ENCODE measurements at regions of chr5 and their contacts with region 1.

Region 1: GRCh38 chr5:81105261-81105877 is 127.8 kb upstream of the CKMT2 start:
- DNase-seq: no peak
- H3K4me3 Mint-ChIP-seq: no peak overlapping the region
- H3K27ac Mint-ChIP-seq: no peak overlapping the region
- H3K4me1 Mint-ChIP-seq: peaks cover 24% of the 10 kb centered on the region
- H3K27me3 Mint-ChIP-seq: no peaks in the 10 kb centered on the region

Region 2: GRCh38 chr5:80686757-80687156 is 418.6 kb before region 1 on chr5:
- intact Hi-C with region 1: loop called (anchors 2 kb)
- DNase-seq: no peak
- H3K4me3 Mint-ChIP-seq: no peak overlapping the region
- H3K27ac Mint-ChIP-seq: no peak overlapping the region
- H3K4me1 Mint-ChIP-seq: peaks cover 27% of the 10 kb centered on the region
- H3K27me3 Mint-ChIP-seq: no peaks in the 10 kb centered on the region

Region 3: GRCh38 chr5:80711938-80712337 is 393.4 kb before region 1 on chr5:
- intact Hi-C with region 1: loop called (anchors 10 kb)
- DNase-seq: no peak
- H3K4me3 Mint-ChIP-seq: no peak overlapping the region
- H3K27ac Mint-ChIP-seq: no peak overlapping the region
- H3K4me1 Mint-ChIP-seq: peaks cover 18% of the 10 kb centered on the region
- H3K27me3 Mint-ChIP-seq: no peaks in the 10 kb centered on the region

Region 4: GRCh38 chr5:81020478-81021174 is 84.7 kb before region 1 on chr5:
- intact Hi-C with region 1: loop called (anchors 2 kb)
- DNase-seq: no peak
- H3K4me3 Mint-ChIP-seq: no peak overlapping the region
- H3K27ac Mint-ChIP-seq: no peak overlapping the region
- H3K4me1 Mint-ChIP-seq: peaks cover 63% of the 10 kb centered on the region
- H3K27me3 Mint-ChIP-seq: no peaks in the 10 kb centered on the region

Region 5: DNA sequence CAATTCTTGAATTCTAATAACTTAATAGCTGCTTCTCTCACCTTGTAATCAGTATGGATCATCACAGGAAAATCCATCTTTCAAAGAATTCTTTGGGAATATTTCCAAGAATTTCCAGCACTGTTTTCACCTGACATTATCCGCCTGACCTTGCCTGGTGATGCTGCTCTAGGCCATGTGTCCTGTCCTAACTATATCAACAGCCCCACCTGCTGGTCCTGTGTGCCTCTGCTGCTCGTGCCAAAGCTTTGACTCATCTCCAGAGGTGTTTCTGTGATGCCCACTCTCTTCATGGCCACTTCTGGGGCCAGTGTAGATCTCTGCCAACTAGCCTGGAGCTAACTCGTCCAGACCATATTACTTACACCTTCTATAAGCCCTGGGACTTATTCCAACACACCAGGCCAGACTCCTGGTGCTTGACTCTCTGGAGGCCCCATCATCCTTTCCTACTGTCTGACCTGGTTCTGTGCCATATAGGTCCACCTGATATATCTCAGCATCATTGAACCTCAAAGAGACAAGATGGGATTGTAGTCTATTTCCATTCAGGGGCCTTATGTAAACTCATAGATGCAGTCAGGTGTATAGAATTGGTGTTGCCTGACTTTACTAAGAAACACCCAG is 60.2 kb after region 1 on chr5:
- intact Hi-C with region 1: loop called (anchors 5 kb)
- DNase-seq: peak; percentile 49
- H3K4me3 Mint-ChIP-seq: no peak overlapping the region
- H3K27ac Mint-ChIP-seq: peak overlapping the region; percentile 38
- H3K4me1 Mint-ChIP-seq: peaks cover 28% of the 10 kb centered on the region
- H3K27me3 Mint-ChIP-seq: no peaks in the 10 kb centered on the region

Region 6: GRCh38 chr5:81194633-81195333 is 89.4 kb after region 1 on chr5:
- intact Hi-C with region 1: loop called (anchors 2 kb)
- DNase-seq: peak; percentile 73
- H3K4me3 Mint-ChIP-seq: no peak overlapping the region
- H3K27ac Mint-ChIP-seq: no peak overlapping the region
- H3K4me1 Mint-ChIP-seq: peaks cover 6% of the 10 kb centered on the region
- H3K27me3 Mint-ChIP-seq: no peaks in the 10 kb centered on the region

Measured in activated T-helper 2 cell treated with anti-CD3 and anti-CD28 coated beads, Interferon-gamma antibody, Interleukin-2, Interleukin-4, amounts not matched to agents 10 μg/mL and 5 μg/mL and 100 μg/mL, durations not matched to agents 14 hours and 24 hours and 36 hours (primary cell).